ENCODE measurements at regions of chr18 and their contacts with region 1.

Region 1: GRCh38 chr18:61581578-61582201 is 248.5 kb downstream of the CDH20 start:
- DNase-seq: no peak
- H3K4me3 ChIP-seq: peak overlapping the region; percentile 53
- CTCF ChIP-seq: peak; percentile 97

Region 2: DNA sequence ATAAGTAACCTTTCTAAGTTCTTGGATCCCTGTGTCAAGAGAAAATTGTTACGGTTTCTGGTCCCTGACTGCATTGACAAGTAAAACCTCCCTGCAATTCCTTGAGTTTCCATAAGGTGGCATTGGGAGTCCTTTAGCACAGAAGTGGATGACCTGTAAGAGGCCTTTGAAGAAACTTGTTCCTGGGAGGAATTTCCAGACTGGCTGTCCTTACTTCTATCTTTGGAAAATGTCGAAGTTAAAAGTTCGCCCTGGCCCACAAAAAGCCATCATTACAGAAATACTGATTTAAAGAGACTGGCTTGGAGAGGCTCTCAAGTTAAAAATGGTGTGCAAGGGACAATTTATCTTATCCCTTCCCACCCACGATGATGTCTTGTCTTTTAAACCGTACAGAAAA is 30.1 kb before region 1 on chr18:
- CTCF ChIA-PET with region 1: interaction called, 52 read pairs
- POLR2A ChIA-PET with region 1: no interaction called
- DNase-seq: peak; percentile 62
- H3K4me3 ChIP-seq: no peak overlapping the region
- CTCF ChIP-seq: peak; percentile 86

Region 3: DNA sequence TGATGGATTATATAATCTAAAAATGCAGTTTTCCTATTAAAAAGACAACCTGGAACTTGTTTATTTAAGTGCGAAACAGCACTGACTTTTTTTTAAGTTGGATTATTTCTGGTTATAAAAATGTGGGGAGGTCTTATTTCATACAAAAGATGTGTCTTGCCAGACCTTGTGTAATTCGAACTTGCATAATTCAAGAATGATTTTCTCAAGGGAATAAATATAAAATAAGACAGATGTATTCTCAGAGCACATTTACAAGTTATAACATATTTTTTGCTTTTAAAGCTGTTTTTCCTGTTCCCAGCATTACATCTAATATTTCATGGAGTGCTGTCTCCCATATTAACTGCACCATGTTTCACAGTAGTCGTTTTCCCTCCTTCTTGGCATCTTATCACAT is 14.6 kb after region 1 on chr18:
- CTCF ChIA-PET with region 1: interaction called, 94 read pairs
- POLR2A ChIA-PET with region 1: no interaction called
- DNase-seq: no peak
- H3K4me3 ChIP-seq: no peak overlapping the region
- CTCF ChIP-seq: no peak

Region 4: GRCh38 chr18:61770279-61770678 is 188.6 kb after region 1 on chr18:
- CTCF ChIA-PET with region 1: no interaction called
- POLR2A ChIA-PET with region 1: no interaction called
- DNase-seq: no peak
- H3K4me3 ChIP-seq: no peak overlapping the region
- CTCF ChIP-seq: no peak

Region 5: GRCh38 chr18:61870151-61870550 is 288.5 kb after region 1 on chr18:
- CTCF ChIA-PET with region 1: interaction called, 10 read pairs
- POLR2A ChIA-PET with region 1: no interaction called
- DNase-seq: no peak
- H3K4me3 ChIP-seq: no peak overlapping the region
- CTCF ChIP-seq: no peak

Region 6: DNA sequence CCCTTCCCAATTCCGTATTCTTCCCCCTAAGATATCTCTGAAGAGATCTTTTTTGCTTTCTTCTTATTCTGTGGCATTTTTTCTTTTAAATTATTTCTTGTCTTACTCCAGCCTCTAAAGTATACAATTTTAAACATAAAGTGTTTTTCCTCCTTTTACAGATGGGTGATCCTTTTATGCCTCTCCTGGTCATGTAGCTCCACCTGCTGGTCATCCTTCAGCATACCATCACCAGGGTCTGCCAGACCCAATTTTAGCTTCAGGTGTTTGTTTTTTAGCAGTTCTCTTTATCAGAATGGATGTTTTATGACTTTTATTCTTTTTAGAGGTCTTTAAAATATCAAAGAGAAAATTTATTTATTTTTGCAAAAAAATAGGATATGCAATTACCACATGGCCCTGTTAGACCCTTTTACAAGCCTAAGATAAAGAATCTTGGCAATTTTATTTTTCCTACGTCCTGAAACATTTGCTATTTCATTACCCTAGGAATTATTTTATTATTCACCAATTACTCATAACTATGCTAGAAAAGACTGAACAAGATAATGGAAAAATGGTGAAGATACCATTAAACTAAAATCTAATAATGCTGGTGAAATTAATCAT is 549.7 kb after region 1 on chr18:
- CTCF ChIA-PET with region 1: interaction called, 88 read pairs
- POLR2A ChIA-PET with region 1: no interaction called
- DNase-seq: no peak
- H3K4me3 ChIP-seq: no peak overlapping the region
- CTCF ChIP-seq: peak; percentile 71